WTC11 (cell line): ENCODE measurements at regions of chr17 and their contacts with region 1.

Region 1: GRCh38 chr17:19321481-19322128 is 40.9 kb downstream of the B9D1 start:
- DNase-seq: peak; percentile 38
- ATAC-seq: peak; percentile 25
- H3K4me3 Mint-ChIP-seq: no peak overlapping the region
- H3K27ac Mint-ChIP-seq: peak overlapping the region; percentile 12
- H3K4me1 Mint-ChIP-seq: peaks cover 23% of the 10 kb centered on the region
- H3K27me3 Mint-ChIP-seq: no peaks in the 10 kb centered on the region
- CTCF ChIP-seq: peak; percentile 43; the same call in 1 of the 2 replicates

Region 2: DNA sequence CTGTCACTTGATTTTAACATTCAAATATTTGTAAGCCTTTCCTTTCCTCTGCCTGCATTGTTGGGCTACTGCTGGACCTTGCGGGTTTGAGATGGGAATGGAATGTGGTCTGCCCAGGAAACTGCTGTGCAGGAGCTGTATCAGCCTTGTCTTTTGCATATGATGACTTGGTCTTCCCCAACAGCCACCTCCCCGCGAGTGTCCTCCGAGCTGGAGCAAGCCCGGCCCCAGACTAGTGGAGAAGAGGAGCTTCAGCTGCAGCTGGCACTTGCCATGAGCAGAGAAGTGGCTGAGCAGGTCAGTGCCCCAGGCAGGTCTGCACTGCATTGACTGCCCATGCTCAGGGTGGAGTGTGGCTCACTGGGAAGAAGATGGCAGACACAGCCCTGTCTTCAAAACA is 11.9 kb before region 1 on chr17:
- CTCF ChIA-PET with region 1: interaction called, 11 read pairs
- POLR2A ChIA-PET with region 1: no interaction called
- DNase-seq: no peak
- ATAC-seq: no peak
- H3K4me3 Mint-ChIP-seq: no peak overlapping the region
- H3K27ac Mint-ChIP-seq: peak overlapping the region; percentile 64; the same call in 1 of the 2 replicates
- H3K4me1 Mint-ChIP-seq: peaks cover 8% of the 10 kb centered on the region
- H3K27me3 Mint-ChIP-seq: no peaks in the 10 kb centered on the region
- CTCF ChIP-seq: no peak

Region 3: DNA sequence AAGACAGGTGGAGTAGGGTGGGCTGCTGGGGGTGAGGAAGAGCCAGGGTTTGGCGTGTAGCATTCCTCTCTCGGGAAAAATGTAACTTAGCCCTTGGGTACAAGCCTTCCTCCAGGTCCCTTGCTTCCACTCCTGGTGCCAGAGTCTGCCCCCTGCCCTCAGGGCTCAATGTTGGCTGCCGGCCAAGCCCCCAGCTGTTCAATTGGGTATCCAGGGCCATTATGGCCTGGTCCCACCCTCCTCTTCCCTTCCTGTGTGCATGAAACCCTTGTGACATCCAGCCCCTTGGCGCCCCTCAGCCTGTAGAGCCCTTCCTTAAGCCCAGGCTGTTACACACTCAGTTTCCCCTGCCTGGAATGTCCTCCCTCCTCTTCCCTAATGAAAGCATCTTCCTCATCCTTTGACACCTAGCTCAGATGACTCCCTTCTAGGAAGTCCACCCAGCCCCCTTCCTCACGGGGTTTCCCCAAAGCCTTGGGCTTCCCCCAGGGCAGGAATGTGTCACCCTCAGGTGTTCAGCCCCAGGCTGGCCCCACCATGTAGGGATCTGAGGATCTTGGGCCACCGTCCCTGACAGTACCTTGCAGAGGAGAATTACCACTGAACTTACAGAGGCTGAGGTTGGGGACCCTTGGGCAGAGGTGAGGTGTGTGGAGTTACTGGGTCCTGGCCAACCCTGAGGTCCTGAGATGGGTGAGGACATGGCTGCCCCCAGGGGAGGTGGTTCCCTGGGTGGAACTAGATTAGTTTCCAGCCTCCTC is 10.9 kb after region 1 on chr17:
- CTCF ChIA-PET with region 1: interaction called, 71 read pairs
- POLR2A ChIA-PET with region 1: no interaction called
- DNase-seq: no peak
- ATAC-seq: no peak
- H3K4me3 Mint-ChIP-seq: no peak overlapping the region
- H3K27ac Mint-ChIP-seq: no peak overlapping the region
- H3K4me1 Mint-ChIP-seq: peaks cover 12% of the 10 kb centered on the region
- H3K27me3 Mint-ChIP-seq: no peaks in the 10 kb centered on the region
- CTCF ChIP-seq: no peak

Region 4: DNA sequence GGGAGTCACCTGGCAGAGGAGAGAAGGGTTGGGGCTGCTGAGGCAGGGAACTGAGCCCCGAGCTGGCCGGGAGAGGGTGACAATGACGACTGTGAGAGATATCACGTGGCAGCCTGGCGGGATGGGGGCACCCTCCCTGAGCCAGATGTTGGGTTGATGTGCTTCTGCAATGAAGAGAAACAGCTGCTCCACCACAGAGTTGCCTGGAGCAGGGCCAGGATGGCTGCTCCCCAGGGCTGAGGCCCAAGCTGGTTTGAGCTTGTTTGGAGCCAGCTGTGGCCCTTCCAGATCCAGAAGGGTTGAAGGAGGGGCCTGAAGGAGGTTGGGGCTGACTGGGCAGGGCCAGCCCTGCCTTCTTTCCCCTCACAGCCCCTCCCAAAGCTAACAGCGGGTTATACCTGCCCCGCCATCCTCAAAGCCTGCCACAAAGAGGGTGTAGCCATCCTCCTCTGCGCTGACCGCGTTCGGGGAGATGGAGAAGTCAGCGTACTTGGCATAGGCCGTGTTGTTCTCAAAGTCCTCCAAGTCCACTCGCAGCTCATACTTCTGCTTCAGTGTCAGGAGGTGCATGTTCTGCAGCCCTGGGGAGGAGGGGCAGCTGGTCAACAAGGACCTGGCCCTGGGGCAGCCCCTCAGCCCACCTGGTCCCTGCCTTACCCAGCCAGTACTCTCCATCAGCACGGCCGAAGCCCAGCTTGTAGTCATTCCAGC is 63.3 kb after region 1 on chr17:
- CTCF ChIA-PET with region 1: no interaction called
- POLR2A ChIA-PET with region 1: no interaction called
- DNase-seq: no peak
- ATAC-seq: no peak
- H3K4me3 Mint-ChIP-seq: no peak overlapping the region
- H3K27ac Mint-ChIP-seq: peak overlapping the region; percentile 88
- H3K4me1 Mint-ChIP-seq: peaks cover 34% of the 10 kb centered on the region
- H3K27me3 Mint-ChIP-seq: no peaks in the 10 kb centered on the region; the same call in 1 of the 2 replicates
- CTCF ChIP-seq: no peak

Region 5: GRCh38 chr17:19573075-19573474 is 251.5 kb after region 1 on chr17:
- CTCF ChIA-PET with region 1: no interaction called
- POLR2A ChIA-PET with region 1: no interaction called
- DNase-seq: no peak
- ATAC-seq: no peak
- H3K4me3 Mint-ChIP-seq: no peak overlapping the region
- H3K27ac Mint-ChIP-seq: no peak overlapping the region
- H3K4me1 Mint-ChIP-seq: peaks cover 31% of the 10 kb centered on the region
- H3K27me3 Mint-ChIP-seq: no peaks in the 10 kb centered on the region; the same call in 1 of the 2 replicates
- CTCF ChIP-seq: no peak